ENCODE measurements at regions of chr3 and their contacts with region 1.

Region 1: GRCh38 chr3:194472290-194472920 is 14.4 kb downstream of the ATP13A3 start:
- DNase-seq: peak in 1 of 10 donors; percentile 19

Region 2: GRCh38 chr3:194364652-194365434 is 107.6 kb before region 1 on chr3:
- intact Hi-C with region 1: no loop called
- DNase-seq: peak in 1 of 10 donors; percentile 11

Region 3: DNA sequence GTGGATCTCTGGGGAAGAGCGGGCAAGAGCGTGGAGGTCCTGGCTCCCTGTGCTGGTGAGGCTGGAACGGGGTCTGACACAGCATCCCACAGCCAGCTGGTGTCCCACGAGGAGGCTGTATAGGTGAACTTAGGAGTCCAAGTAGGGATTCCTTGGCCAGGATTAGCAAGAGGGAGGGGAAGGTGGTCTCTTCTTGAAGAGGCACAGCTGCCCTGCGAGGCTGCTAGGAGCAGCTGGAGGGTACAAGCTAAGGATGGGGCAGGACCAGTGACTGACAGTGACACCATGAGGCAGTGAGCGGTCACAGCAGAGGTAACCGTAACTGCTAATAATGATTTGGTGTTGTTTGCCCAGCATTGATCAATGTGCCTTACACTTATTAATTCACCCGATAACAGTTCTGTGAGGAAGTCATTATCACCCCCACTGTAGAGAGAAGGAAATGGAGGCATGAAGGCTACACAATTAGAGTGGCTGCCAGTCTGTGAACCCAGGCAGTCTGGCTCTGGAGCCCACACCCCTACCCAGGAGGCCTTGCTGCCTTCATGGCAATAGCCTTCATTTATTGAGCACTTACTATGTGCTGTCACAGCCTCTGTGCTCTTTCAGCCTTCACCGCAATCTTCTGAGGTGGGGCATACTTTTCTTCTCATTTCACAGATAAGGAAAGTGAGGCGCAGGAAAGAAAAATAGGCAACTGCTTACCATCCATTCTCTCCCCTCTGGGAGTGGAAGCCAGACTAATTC is 101.5 kb after region 1 on chr3:
- intact Hi-C with region 1: loop called (anchors 5 kb)
- DNase-seq: peak in 4 of 10 donors; percentile 19 to 75 (median 27)

Region 4: DNA sequence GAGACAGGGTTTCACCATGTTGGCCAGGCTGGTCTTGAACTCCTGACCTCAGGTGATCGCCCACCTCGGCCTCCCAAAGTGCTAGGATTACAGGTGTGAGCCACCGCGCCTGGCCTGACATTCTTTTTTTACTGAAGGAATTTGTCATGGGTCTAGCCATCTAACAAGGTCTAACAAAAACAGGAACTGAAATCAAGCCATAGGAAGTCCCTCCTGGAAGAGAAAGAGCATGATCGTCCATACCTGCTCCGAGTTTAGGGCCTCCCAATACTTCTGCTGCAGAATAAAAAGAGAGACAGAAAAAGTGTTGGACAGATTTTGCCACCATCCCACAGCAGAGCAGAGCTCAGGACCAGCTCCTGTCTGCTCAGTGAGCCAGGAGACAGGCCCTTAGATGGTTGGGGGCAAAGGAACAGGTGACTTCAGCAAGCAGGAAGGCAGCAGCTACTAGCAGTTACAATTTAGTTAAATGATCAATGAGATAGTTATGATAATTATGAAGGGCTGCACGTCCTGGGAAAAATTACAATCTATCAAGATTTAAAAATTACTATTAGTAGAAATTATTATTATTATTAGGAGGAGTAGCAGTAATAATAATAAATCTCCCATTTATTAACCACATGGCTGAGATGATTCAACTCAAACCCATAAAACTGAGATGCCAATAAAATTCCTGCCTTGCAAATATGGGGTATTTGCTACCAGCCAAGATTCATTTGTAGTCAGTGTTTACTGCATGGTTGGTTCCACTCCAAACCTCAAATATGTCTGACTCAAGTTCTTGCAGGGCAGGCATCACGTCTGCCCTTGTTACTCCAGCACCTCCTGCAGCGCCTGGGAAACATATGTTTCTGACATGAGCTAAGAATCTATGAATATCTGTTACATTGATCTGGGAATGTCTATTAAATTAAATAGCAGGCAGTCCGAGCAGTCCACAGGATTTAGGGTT is 120.7 kb after region 1 on chr3:
- intact Hi-C with region 1: loop called (anchors 1 kb)
- DNase-seq: peak in 1 of 10 donors; percentile 31